ENCODE measurements at regions of chr10 and their contacts with region 1.

Region 1: GRCh38 chr10:23293145-23293724 is 51.4 kb downstream of the C10orf67 start:
- DNase-seq: peak; percentile 55
- ATAC-seq: peak; percentile 74
- H3K4me3 Mint-ChIP-seq: no peak overlapping the region
- H3K27ac Mint-ChIP-seq: no peak overlapping the region
- H3K4me1 Mint-ChIP-seq: no peaks in the 10 kb centered on the region
- H3K27me3 Mint-ChIP-seq: peaks cover 30% of the 10 kb centered on the region

Region 2: GRCh38 chr10:23158370-23158769 is 134.9 kb before region 1 on chr10:
- CTCF ChIA-PET with region 1: interaction called, 52 read pairs
- DNase-seq: peak; percentile 44
- ATAC-seq: peak; percentile 42
- H3K4me3 Mint-ChIP-seq: no peak overlapping the region
- H3K27ac Mint-ChIP-seq: no peak overlapping the region
- H3K4me1 Mint-ChIP-seq: peaks cover 7% of the 10 kb centered on the region
- H3K27me3 Mint-ChIP-seq: peaks cover 10% of the 10 kb centered on the region

Measured in activated CD8-positive, alpha-beta memory T cell treated with anti-CD3 and anti-CD28 coated beads, Interleukin-2, amount 10 ng/mL, durations not matched to agents 7 days and 5 days (primary cell).